Activated CD4-positive, alpha-beta T cell treated with anti-CD3 and anti-CD28 coated beads, Interleukin-2, amount 10 ng/mL, durations not matched to agents 24 days and 14 days (primary cell): ENCODE measurements at regions of chr2 and their contacts with region 1.

Region 1: DNA sequence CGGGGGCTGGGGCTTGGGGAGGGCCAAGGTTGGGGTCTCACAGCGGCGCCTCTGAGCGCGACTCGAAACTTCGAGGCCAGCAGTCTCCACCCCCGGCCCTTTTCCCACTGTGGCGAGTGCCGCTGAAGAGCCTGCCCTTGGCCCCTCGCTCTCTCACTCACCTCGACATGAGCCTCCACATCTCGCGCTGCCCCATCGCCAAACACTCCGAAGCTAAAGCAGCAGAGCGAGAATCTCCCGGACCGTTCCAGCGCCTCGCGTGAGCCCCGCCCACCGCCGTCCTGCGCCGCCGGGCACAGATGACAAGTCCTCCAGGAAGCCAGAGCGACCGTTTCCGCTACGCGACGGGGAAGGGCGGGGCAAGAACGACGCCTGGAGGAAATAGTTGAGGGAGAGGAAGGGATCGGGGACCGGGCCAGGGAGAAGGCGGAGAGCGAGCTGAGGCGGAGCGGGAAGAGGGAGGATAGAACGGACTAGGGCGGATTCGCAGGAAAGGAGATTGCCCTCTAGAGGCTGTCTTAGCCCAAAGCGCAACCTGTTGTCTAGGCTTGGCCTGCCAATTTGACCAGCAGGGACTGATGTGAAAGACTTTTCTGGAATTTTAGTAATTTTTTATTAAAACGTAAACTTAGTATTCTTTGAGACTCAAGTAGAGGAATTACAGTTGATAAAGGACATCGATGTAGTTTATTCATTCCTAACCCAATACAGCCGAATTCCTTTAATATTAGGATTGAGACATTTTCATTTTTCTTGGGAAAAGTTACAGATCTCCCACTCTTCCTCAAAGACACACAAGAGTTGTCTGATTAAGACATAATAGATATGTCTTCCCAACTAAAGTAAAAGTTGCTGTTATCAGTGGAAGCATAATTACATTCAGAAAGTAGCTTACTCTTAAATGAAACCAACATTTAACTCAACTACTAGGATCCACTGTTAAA is at the start of gene HIBCH:
- DNase-seq: peak; percentile 96
- H3K4me3 Mint-ChIP-seq: peak within 1 kb of the TSS; percentile 95
- H3K27ac Mint-ChIP-seq: peak within 1 kb of the TSS; percentile 94
- H3K4me1 Mint-ChIP-seq: peaks cover 35% of the 10 kb centered on the region
- H3K27me3 Mint-ChIP-seq: peaks cover 2% of the 10 kb centered on the region
- total RNA-seq, gene HIBCH: 26.7 and 29.1 TPM in 2 replicates

Region 2: DNA sequence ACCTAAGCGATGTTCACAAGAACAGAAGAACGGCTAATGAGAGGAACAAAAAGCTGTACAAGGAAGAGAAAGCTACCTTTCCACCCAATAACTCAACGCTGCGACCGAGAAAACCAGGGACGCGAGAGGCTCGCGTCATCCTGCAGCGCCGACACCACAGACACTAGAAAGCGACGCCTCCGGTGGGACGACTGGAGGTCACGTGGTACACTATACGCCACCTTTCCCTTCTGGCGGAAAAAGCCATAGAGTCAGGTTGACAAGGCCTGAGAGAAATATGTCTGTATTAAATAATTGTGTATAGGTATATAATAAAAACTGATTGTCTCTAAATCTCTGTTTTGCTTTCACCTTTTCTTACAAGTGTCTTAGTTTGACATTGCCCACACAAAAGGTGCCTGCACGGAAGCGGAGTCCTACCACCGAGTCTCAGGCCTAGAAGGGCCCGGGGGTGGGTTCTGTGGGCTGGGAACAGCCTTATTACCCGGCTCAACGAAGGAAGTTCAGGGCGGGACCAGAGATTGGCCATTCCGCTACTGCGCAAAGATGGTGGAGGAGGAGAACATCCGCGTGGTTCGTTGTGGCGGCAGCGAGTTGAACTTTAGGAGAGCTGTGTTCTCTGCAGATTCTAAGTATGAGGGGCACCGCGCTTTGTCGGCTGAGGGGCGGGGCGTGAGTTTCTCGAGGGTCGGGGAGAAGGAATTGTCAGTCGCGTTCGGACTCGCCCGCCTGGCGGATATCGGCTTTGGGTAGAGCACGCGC is 878.7 kb before region 1 on chr2 and contains the start of gene WDR75:
- intact Hi-C with region 1: loop called (anchors 10 kb)
- DNase-seq: peak; percentile 98
- H3K4me3 Mint-ChIP-seq: no peak within 1 kb of the TSS
- H3K27ac Mint-ChIP-seq: peak within 1 kb of the TSS; percentile 99
- H3K4me1 Mint-ChIP-seq: peaks cover 13% of the 10 kb centered on the region
- H3K27me3 Mint-ChIP-seq: peaks cover 7% of the 10 kb centered on the region
- total RNA-seq, gene WDR75: 117 and 121 TPM in 2 replicates

Region 3: GRCh38 chr2:190075623-190076022 is 244.2 kb before region 1 on chr2:
- intact Hi-C with region 1: no loop called
- DNase-seq: no peak
- H3K4me3 Mint-ChIP-seq: no peak overlapping the region
- H3K27ac Mint-ChIP-seq: no peak overlapping the region
- H3K4me1 Mint-ChIP-seq: no peaks in the 10 kb centered on the region
- H3K27me3 Mint-ChIP-seq: peaks cover 24% of the 10 kb centered on the region

Region 4: GRCh38 chr2:190088917-190089316 is 230.9 kb before region 1 on chr2:
- intact Hi-C with region 1: loop called (anchors 2 kb)
- DNase-seq: peak; percentile 84
- H3K4me3 Mint-ChIP-seq: no peak overlapping the region
- H3K27ac Mint-ChIP-seq: no peak overlapping the region
- H3K4me1 Mint-ChIP-seq: no peaks in the 10 kb centered on the region
- H3K27me3 Mint-ChIP-seq: peaks cover 5% of the 10 kb centered on the region

Region 5: DNA sequence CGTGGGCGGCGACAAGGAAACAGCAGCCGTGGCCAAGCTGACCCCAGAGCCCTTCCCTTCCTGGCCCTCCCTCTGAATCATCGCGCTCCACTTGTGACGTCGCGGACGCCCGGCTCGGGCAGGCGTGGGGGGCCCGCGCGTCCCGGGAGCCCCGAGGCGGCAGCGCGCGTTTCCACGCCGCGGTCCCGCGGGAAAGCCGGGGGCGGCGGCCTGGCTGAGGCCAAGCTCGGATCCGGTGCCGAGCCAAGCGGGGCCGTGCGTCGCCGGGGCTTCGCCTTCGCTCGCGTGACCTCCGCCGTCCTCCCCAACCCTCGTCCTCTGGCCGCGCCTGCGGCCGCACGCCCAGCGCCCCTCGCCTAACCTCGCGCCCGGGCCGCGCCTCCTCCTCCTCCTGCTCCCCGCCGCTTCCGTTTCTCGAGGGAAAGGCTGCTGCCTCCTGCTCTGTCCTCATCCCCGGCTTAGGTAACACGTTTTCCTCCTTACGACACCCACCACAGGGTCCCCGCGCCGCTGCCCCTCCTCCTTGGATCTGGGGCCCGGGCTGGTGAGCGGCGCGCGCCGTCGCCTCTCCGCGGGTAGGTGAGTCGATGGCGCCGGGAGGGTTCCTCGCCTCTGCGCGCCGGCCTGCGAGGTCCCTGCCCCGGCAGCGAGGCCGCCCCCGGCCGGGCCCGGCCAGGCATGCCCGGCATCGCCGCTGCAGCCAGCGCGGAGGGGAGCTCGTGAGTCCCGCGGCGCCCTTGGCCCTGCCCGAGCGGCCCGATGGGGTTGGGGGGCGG is 23.9 kb after region 1 on chr2 and contains the start of gene INPP1:
- intact Hi-C with region 1: loop called (anchors 1 kb)
- DNase-seq: peak; percentile 82
- H3K4me3 Mint-ChIP-seq: peak within 1 kb of the TSS; percentile 87
- H3K27ac Mint-ChIP-seq: peak within 1 kb of the TSS; percentile 85
- H3K4me1 Mint-ChIP-seq: peaks cover 21% of the 10 kb centered on the region
- H3K27me3 Mint-ChIP-seq: peaks cover 19% of the 10 kb centered on the region
- total RNA-seq, gene INPP1: 9.2 and 10.3 TPM in 2 replicates

Region 6: DNA sequence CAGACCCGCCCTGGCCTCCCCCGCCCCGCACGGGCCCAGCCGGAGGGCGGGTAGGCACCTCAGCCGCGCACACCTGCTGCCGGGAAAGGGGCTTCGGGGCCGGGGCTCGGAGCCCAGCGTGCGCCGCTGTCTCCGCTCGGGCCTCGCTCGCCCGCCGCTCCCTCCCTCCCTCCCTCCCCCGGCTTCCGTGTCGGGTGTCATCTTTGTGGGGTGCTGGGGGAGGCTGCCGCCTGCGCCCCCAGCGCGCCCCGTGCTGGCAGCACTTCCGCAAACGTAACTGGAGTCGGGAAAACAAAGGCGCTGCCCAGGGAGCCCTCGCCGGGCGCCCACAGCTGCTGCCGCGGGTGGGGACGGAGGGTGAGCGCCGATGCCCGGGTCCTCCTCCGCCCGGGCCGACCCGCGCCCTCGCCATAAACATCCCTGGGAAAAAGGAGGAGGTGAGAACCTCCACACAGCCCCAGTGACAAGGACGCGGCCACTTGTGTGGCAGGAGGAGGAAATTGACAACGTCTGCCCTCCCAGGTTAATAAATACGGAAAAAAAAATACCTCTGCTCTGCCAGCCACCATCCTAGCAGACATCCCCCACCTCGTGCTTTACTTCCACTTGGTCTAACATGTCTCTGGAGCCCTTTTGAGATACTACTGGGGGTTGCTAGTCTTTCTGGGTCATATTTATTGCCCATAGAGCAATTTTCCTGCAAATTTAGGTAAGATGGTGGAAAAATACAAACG is 88.9 kb after region 1 on chr2:
- intact Hi-C with region 1: loop called (anchors 1 kb)
- DNase-seq: peak; percentile 91
- H3K4me3 Mint-ChIP-seq: peak overlapping the region; percentile 87
- H3K27ac Mint-ChIP-seq: peak overlapping the region; percentile 94
- H3K4me1 Mint-ChIP-seq: peaks cover 41% of the 10 kb centered on the region
- H3K27me3 Mint-ChIP-seq: no peaks in the 10 kb centered on the region

Region 7: DNA sequence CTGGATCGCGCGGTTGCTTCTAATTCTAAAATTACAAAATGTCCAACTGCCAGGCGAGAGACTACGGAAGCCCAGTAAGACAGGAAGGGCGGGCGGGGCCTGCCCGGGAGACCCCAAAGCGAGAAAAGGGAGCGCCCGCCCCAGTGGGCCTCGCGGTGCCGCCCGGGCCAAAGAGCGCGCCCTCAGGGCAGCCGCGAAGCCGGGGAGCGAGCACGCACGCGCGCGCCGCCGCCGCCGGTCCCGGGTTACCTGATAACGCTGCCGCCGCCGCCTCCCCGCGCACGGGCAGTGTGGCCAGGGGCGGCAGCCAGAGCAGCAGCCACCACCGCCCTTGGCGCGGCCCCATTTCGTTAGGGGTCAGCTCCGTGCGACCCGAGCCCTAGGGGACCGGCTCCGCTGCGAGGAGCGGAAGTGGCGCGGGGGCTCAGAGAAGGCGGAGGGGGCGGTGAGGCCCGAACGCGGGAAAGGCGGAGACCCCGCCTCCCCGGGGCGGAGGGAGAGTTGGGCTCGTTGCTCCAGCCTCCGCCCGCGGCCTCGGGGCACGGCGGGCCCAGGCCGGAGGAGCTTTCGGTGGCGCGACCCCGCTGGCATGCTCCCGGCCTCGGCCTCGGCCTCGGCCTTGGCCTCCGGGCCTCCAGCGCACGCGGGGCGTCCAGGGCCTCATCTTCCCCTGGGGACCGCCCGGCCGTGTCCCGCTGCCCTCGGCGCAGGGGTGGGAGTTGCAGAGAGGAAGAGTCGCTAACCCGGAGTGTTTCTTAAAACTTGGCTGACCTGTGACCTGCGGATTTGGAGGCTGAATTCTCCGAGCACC is 214.7 kb after region 1 on chr2 and contains the start of gene NEMP2:
- intact Hi-C with region 1: loop called (anchors 1 kb)
- DNase-seq: peak; percentile 95
- H3K4me3 Mint-ChIP-seq: peak within 1 kb of the TSS; percentile 93
- H3K27ac Mint-ChIP-seq: peak within 1 kb of the TSS; percentile 99
- H3K4me1 Mint-ChIP-seq: peaks cover 41% of the 10 kb centered on the region
- H3K27me3 Mint-ChIP-seq: no peaks in the 10 kb centered on the region
- total RNA-seq, gene NEMP2: 16.4 and 19.0 TPM in 2 replicates